Heart right ventricle (tissue), 16 donors: ENCODE measurements at regions of chr22 and their contacts with region 1.

Region 1: GRCh38 chr22:40289991-40290459 is 56.3 kb upstream of the ADSL start:
- DNase-seq: no peak
- ATAC-seq: peak in 7 of 8 donors; percentile 55 to 83 (median 69)
- H3K4me3 ChIP-seq: no peak overlapping the region
- H3K27ac ChIP-seq: peak overlapping the region in 3 of 10 donors; percentile 23 to 80 (median 46)
- H3K4me1 ChIP-seq: peaks cover 0 to 25% (median 0%) of the 10 kb centered on the region in 9 donors
- H3K27me3 ChIP-seq: no peaks in the 10 kb centered on the region
- CTCF ChIP-seq: no peak

Region 2: DNA sequence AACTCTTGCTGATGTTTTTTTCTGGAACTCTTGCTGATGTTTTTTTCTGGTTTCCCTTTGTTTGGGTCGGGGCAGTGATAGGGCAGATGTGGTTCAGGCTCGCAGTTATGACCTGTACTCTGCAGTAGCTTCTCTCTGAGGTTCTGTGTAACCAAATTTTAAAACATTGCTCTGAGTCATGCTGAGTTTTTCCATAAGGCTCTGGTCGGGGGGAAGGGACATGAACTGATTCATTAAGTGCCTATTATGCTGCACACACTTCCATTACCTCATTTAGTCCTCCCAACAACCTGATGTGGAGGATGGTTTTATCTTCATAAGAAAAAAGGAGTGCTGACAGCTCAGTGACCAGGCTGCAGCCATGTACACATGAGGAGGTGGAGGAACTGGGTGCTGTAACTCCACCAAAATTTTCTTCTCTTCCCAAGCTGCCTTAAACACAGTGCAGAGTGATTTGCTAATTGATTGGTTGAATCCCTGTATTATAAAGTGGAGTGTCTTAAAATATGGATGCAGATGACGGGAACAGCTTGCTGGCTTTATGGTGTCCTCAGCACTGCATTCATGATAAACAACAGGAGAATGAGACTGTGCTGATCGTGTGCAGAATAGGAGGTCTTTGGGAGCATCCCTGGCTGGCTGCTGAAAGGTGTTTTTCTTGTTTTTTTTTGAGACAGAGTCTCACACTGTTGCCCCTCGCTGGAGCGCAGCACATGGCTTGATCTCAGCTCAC is 93.2 kb before region 1 on chr22:
- intact Hi-C with region 1: no loop called
- DNase-seq: no peak
- ATAC-seq: peak in 7 of 8 donors; percentile 34 to 89 (median 62)
- H3K4me3 ChIP-seq: no peak overlapping the region
- H3K27ac ChIP-seq: peak overlapping the region in 7 of 10 donors; percentile 21 to 68 (median 41)
- H3K4me1 ChIP-seq: peaks cover 7 to 98% (median 73%) of the 10 kb centered on the region in 9 donors
- H3K27me3 ChIP-seq: no peaks in the 10 kb centered on the region
- CTCF ChIP-seq: no peak

Region 3: DNA sequence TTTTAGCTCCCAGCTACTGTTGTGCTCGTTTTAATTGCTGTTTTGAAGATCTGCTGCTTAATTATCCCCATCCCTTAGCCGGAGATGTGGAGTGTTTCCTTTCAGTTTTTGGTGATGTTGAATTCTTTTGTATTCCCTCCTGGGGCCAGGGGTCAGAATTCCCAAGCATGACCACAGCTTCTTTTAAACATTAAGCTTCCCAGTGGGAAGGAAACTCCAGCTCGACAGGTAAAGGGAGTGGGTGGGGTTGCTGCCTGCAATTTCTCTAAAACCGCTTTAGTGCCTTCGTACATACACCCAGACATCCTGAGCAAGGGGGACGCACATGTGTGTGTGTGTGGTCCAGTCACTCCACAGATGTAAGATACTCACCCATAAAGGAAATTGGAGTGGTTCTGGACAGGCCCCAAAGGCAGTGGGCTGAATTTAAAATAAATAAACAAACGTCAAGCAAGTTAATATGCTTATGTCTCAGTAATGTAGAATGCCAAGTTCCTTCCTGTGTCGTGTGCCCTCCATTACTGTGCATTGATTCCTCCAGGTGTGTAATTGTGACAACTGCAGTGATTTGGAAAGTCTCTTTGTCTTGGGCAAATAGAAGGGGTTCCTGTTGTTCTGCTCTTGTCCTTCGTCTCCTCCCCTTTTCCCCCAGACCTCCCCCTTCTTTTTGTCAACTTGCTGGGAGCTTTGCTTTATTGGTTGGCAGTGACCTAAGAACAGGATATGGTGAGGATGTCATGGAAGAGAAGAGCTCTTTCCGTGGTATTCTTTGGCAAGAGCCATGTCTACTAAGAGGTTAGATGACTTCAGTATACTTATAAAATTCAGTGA is 37.1 kb after region 1 on chr22:
- intact Hi-C with region 1: loop called in 1 of 10 experiments (anchors 5 kb)
- DNase-seq: no peak
- ATAC-seq: peak in 4 of 8 donors; percentile 31 to 55 (median 47)
- H3K4me3 ChIP-seq: no peak overlapping the region
- H3K27ac ChIP-seq: peak overlapping the region in 6 of 10 donors; percentile 2 to 51 (median 22)
- H3K4me1 ChIP-seq: peaks cover 0 to 48% (median 13%) of the 10 kb centered on the region in 9 donors
- H3K27me3 ChIP-seq: no peaks in the 10 kb centered on the region
- CTCF ChIP-seq: no peak